BJ (cell line): ENCODE measurements at regions of chr19 and their contacts with region 1.

Region 1: DNA sequence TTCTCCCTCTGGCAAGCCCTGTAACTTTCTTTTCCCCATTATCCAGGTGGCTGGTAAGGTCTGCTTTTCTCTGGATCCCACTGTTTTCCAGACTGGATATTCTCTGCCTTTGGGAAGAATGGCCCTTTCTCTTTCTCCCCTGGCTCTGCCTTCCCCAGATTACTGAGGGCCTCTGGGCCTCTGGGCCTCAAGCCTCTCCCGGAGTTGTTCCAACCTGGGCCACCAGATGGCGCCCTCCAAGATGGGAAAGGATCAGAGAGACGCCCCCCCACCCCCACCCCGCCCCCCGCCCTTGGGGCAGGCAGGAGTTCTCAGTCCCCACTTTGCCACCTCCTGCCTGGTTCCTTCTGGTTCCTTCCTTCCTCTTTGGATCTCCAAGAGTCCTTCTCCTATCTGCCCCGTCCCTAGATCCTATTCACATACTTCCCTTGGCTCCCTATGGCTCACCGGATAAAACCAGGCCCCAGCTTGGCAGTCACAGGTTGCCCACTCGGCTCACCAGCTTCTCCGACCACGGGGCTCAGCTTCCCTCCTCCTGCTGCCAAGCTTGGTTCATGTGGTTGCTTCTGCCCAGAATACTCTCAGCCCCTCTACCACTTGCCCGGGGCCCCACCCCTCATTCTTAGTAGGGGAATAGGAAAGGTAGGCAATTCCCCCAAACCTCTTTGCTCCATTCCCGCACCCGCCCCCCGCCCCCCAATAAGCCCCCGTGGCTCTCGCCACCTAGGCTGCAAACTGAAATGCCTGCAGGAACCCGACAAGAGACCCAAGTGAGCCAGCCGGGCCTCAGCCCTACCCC is 13.1 kb downstream of the EPS8L1 start:
- DNase-seq: no peak
- H3K4me3 ChIP-seq: no peak overlapping the region
- H3K27me3 ChIP-seq: peaks cover 10% of the 10 kb centered on the region
- CTCF ChIP-seq: peak; percentile 71

Region 2: GRCh38 chr19:55066204-55066617 is 22.5 kb before region 1 on chr19:
- CTCF ChIA-PET with region 1: interaction called, 11 read pairs
- POLR2A ChIA-PET with region 1: interaction called, 37 read pairs
- DNase-seq: no peak
- H3K4me3 ChIP-seq: no peak overlapping the region
- H3K27me3 ChIP-seq: peaks cover 13% of the 10 kb centered on the region
- CTCF ChIP-seq: no peak

Region 3: DNA sequence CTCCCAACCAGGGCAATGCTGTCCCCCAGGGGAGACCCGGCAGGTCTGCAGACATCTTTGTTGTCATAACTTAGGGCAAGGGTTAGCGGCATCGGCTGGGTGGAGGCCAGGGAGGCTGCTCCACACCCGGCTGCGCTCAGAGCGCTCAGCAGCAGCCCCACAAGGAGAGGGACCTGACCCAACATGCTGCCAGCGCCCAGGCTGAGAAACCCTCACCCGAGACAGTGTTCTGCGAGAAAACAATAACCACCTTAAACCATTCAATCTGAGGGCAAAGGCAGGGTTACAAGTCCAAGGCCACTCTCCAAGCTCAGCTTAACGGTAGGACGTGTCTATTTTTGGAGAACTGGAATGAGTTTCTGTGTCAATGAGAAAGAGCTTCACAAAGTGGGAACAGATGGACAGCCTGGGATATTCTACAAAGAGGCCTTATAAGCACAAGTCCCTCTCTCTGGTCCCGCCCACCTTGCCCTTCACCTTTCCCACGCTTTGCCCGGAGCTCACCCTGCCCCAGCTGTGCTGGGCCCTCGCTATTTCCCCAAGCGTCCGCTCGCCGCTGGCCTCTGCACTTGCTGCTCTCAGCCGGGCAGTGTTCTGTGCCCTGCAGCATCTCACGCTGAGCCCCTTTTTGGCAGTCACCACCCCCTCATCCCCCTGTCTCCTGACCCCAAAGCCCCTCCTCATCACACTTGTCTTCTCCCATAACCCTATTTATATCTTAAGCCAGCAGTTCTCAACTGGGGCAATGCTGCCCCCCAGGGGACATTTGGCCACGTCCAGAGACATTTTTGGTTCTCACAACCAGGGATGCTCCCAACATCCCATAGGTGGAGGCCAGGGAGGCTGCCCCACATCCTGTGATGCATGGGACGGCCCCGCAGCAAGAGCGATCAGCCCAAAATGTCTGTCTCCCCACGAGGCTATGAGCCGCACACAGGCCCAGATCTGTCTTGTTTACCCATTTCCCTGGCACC is 11.1 kb after region 1 on chr19:
- CTCF ChIA-PET with region 1: interaction called, 40 read pairs
- POLR2A ChIA-PET with region 1: no interaction called
- DNase-seq: no peak
- H3K4me3 ChIP-seq: no peak overlapping the region
- H3K27me3 ChIP-seq: no peaks in the 10 kb centered on the region
- CTCF ChIP-seq: peak; percentile 15; the same call in 1 of the 2 replicates

Region 4: DNA sequence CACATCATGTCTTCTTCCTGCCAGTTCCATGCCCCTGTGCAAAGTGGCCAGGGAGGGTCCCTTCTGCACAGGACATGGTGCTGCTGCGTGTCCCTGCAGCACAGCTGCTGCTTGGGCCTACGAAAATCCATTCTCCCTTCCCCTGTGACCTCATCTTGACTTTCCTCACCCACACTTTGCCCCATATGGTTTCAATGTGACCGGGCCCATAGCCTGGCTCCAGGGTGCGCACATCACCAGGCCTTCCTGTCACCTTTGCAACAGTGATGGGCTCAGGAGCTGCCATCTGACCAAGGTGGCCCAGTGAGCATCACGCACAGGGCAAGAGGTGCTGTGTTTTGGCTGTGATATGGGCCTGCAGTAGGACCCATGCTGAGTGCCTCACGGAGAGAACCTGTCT is 17.8 kb after region 1 on chr19:
- CTCF ChIA-PET with region 1: interaction called, 40 read pairs
- POLR2A ChIA-PET with region 1: no interaction called
- DNase-seq: no peak
- H3K4me3 ChIP-seq: no peak overlapping the region
- H3K27me3 ChIP-seq: no peaks in the 10 kb centered on the region
- CTCF ChIP-seq: no peak

Region 5: GRCh38 chr19:55117636-55118391 is 29.1 kb after region 1 on chr19 and contains the start of gene PPP1R12C:
- CTCF ChIA-PET with region 1: interaction called, 10 read pairs
- POLR2A ChIA-PET with region 1: no interaction called
- DNase-seq: peak; percentile 94
- H3K4me3 ChIP-seq: peak within 1 kb of the TSS; percentile 97
- H3K27me3 ChIP-seq: no peaks in the 10 kb centered on the region; the same call in 1 of the 2 replicates
- CTCF ChIP-seq: no peak
- polyA plus RNA-seq, gene PPP1R12C: 36.0 and 50.8 TPM in 2 replicates

Region 6: DNA sequence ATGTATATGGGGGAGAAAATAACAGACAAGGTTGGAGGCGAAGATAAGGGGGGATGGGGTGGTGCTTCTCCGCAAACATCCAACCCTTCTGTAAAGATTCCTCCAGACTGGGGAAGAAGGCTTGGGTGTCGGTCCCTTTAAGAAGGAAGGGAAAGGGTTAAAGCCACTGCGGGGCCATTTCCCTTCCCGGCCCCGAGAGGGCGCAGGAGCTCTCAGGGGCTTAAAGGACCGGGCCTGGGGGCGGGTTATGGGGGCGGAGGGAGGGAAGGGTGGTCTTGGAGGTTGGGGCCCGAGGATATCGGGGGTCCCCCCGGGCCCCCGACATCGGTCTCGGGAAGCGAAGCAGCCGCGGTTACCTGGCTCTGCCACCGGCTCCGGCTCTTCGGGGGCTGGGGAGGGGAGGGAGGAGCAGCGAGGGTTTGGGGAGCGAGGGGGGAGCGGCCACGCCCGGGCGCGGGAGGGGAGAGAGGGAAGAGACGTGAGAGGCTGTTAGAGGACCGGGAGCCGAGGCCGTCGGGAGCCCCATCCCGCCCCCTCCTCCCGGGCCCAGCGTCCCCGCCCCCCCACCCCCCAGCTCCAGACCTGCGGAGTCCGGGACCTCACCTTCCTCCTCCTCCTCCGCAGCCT is 57.4 kb after region 1 on chr19:
- CTCF ChIA-PET with region 1: no interaction called
- POLR2A ChIA-PET with region 1: no interaction called
- DNase-seq: no peak
- H3K4me3 ChIP-seq: peak overlapping the region; percentile 48
- H3K27me3 ChIP-seq: peaks cover 6% of the 10 kb centered on the region
- CTCF ChIP-seq: peak; percentile 89

Region 7: GRCh38 chr19:55160128-55160985 is 71.6 kb after region 1 on chr19:
- CTCF ChIA-PET with region 1: interaction called, 12 read pairs
- POLR2A ChIA-PET with region 1: no interaction called
- DNase-seq: no peak
- H3K4me3 ChIP-seq: no peak overlapping the region
- H3K27me3 ChIP-seq: peaks cover 7% of the 10 kb centered on the region; the same call in 1 of the 2 replicates
- CTCF ChIP-seq: peak; percentile 98